ENCODE measurements at regions of chr2 and their contacts with region 1.

Region 1: GRCh38 chr2:181104512-181105115 is 124.2 kb downstream of the UBE2E3 start:
- DNase-seq: peak; percentile 37
- H3K4me3 ChIP-seq: no peak overlapping the region
- CTCF ChIP-seq: peak; percentile 58

Region 2: DNA sequence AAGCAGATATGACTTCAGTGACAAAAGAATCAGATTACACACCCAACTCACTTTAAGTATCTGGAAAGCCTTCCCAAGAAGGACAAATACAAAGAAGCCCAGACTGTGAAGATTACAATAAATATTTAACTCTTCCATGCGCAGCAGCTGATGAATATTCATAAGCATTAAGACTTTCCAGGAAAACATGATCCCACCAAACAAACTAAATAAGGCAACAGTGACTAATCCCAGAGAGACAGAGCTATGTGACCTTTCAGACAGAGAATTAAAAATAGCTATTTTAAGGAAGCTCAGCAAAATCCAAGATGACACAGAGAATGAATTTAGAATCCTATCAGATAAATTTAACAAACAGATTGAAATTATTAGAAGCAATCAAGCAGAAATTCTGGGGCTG is 232.4 kb before region 1 on chr2:
- CTCF ChIA-PET with region 1: no interaction called
- POLR2A ChIA-PET with region 1: no interaction called
- DNase-seq: no peak
- H3K4me3 ChIP-seq: no peak overlapping the region
- CTCF ChIP-seq: no peak

Region 3: GRCh38 chr2:181085734-181086133 is 18.9 kb before region 1 on chr2:
- CTCF ChIA-PET with region 1: interaction called, 10 read pairs
- POLR2A ChIA-PET with region 1: no interaction called
- DNase-seq: no peak
- H3K4me3 ChIP-seq: no peak overlapping the region
- CTCF ChIP-seq: no peak

Region 4: GRCh38 chr2:181457121-181457740 is 352.6 kb after region 1 on chr2 and contains the start of gene ITGA4:
- CTCF ChIA-PET with region 1: interaction called, 33 read pairs
- POLR2A ChIA-PET with region 1: no interaction called
- DNase-seq: no peak
- H3K4me3 ChIP-seq: peak within 1 kb of the TSS; percentile 73
- CTCF ChIP-seq: peak; percentile 97

Region 5: GRCh38 chr2:181466661-181467576 is 362.3 kb after region 1 on chr2:
- CTCF ChIA-PET with region 1: interaction called, 86 read pairs
- POLR2A ChIA-PET with region 1: no interaction called
- DNase-seq: no peak
- H3K4me3 ChIP-seq: no peak overlapping the region
- CTCF ChIP-seq: peak; percentile 69

Region 6: GRCh38 chr2:181715033-181715630 is 610.5 kb after region 1 on chr2:
- CTCF ChIA-PET with region 1: interaction called, 51 read pairs
- POLR2A ChIA-PET with region 1: no interaction called
- DNase-seq: peak; percentile 41
- H3K4me3 ChIP-seq: no peak overlapping the region
- CTCF ChIP-seq: peak; percentile 60